Lower leg skin (tissue), 4 donors: ENCODE measurements at regions of chr2 and their contacts with region 1.

Region 1: DNA sequence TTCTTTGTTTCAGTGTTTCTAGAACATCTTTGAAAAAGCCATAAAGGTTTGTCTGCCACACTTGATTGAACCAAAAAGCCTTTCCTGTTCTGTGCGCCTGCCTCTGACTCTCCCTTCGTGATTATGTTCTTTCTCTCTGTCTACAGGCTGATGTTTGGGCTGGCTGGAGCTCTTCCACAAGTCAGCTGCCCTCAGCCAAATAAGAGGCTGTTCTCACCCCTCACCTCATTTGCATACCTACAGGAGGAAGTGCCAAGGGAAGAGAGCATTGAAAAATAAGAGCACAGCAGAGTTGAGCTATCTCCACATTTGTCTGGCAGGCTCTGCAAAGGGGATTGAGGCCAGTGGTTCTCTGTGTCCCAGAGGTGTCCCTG is 15.8 kb downstream of the INPP5D start:
- DNase-seq: peak in 1 of 2 donors; percentile 75
- H3K4me3 ChIP-seq: no peak overlapping the region
- CTCF ChIP-seq: no peak
- POLR2A ChIP-seq: no peak

Region 2: GRCh38 chr2:231270221-231271114 is 1805.5 kb before region 1 on chr2:
- intact Hi-C with region 1: no loop called
- DNase-seq: no peak
- H3K4me3 ChIP-seq: no peak overlapping the region
- CTCF ChIP-seq: no peak
- POLR2A ChIP-seq: no peak

Region 3: GRCh38 chr2:232789082-232789481 is 286.9 kb before region 1 on chr2:
- intact Hi-C with region 1: no loop called
- DNase-seq: no peak
- H3K4me3 ChIP-seq: no peak overlapping the region
- CTCF ChIP-seq: no peak
- POLR2A ChIP-seq: no peak

Region 4: DNA sequence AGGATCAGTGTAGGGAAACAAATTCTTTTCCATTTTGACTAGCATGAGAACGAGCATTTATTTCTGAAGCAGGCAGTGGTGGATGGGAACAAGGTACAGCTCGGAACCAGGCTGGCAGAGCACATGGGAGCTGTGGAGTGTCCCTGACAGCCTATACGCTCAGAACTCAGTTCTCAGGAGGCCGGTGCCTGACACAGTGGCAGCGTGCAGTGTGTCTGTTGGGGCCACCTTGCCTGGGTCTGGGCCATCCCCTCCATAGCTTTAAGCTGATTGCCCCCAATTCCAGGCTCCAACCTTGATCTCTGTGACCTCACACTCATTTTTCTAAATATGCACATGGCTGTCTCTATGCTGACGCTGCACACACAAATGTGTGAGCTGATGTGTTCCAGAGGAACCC is 121.1 kb after region 1 on chr2:
- intact Hi-C with region 1: no loop called
- DNase-seq: no peak
- H3K4me3 ChIP-seq: no peak overlapping the region
- CTCF ChIP-seq: no peak
- POLR2A ChIP-seq: no peak

Region 5: DNA sequence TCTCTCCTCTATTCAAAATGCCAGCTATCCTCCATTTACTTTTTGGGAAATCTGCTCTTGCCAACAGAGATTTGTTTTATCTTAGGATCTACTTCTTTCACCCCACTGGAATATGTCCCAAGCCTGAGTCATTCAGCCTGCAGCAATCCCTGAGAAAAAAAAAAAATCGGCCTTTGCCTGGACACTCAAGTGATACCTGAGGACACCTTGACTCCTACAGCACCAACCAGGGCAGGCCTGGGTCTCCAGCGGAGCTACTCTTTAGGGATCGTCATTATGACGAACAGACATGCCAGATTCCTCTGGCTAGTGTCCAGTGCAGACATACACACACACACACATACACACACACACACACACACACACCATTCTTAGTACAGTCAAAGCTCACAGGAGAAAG is 614.5 kb after region 1 on chr2:
- intact Hi-C with region 1: loop called (anchors 5 kb)
- DNase-seq: no peak
- H3K4me3 ChIP-seq: no peak overlapping the region
- CTCF ChIP-seq: no peak
- POLR2A ChIP-seq: no peak

Region 6: DNA sequence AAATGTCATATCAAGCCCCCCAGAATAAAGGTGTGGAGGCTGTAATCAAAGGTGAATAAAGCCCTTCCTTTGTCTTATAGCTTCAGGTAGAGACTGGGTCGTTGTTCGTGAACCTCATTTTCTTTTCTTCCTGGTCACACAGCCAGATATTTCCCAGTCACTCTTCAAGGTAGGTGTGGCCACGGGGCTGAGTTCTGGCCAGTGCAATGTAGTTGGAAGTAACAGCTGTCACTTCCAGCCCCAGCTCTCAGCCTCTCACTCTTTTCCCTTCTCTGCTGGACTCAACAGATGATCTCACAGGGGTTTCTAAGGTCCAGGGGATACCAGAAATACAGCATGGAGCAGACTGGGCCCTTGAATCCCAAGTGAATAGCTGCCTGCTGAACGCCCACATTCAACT is 825.4 kb after region 1 on chr2:
- intact Hi-C with region 1: no loop called
- DNase-seq: no peak
- H3K4me3 ChIP-seq: no peak overlapping the region
- CTCF ChIP-seq: no peak
- POLR2A ChIP-seq: no peak